Aorta (tissue), 5 donors: ENCODE measurements at regions of chr7 and their contacts with region 1.

Region 1: GRCh38 chr7:94972296-94972695 is 64.9 kb downstream of the PPP1R9A start:
- DNase-seq: no peak
- ATAC-seq: no peak
- H3K4me3 ChIP-seq: no peak overlapping the region
- H3K27ac ChIP-seq: no peak overlapping the region
- H3K4me1 ChIP-seq: peaks cover 0 to 14% of the 10 kb centered on the region in 2 donors
- H3K27me3 ChIP-seq: no peaks in the 10 kb centered on the region

Region 2: GRCh38 chr7:94907026-94907810 is 65.1 kb before region 1 on chr7 and contains the start of gene PPP1R9A:
- intact Hi-C with region 1: loop called in 1 of 2 experiments (anchors 5 kb)
- DNase-seq: peak in 1 of 2 donors; percentile 76
- ATAC-seq: peak; percentile 43
- H3K4me3 ChIP-seq: peak within 1 kb of the TSS; percentile 84 to 90
- H3K27ac ChIP-seq: peak within 1 kb of the TSS in 1 of 2 donors; percentile 0
- H3K4me1 ChIP-seq: peaks cover 0 to 3% of the 10 kb centered on the region in 2 donors
- H3K27me3 ChIP-seq: no peaks in the 10 kb centered on the region
- total RNA-seq, gene PPP1R9A: 7.4 to 12.0 TPM

Region 3: DNA sequence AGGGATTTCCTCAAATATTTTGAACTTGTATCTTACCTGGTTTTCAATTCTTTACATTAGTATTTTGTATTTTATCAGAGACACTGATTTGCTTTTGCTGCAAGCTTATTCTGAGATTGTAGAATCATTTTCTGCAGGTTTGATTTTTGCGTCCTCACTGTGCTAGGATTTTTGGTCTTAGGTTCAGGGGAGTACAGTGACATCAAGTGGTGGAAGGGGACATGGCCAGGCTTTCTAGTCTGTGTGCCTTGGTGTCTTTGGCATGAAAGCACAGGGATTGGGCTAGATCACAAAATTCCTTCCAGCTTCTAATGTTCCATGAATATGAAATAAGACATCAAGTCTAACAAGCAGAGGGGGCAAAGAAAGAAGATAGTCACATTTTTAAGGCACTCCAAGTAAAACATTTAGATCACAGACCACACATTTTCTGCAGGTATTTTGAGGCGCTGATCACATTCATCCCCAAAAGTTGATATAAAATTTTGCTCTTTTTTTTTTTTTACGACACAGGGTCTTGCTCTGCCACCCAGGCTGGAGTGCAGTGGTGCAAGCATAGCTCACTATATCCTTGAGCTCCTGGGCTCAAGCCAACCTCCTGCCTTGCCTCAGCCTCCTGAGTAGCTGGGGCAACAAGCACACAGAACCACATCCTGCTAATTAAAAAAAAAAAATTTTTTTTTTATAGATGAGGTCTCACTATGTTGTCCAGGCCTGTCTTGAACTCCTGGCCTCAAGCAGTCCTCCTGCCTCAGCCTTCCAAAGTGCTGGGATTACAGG is 227.7 kb after region 1 on chr7:
- intact Hi-C with region 1: no loop called
- DNase-seq: peak in 1 of 2 donors; percentile 48
- ATAC-seq: peak; percentile 80
- H3K4me3 ChIP-seq: no peak overlapping the region
- H3K27ac ChIP-seq: no peak overlapping the region
- H3K4me1 ChIP-seq: no peaks in the 10 kb centered on the region
- H3K27me3 ChIP-seq: no peaks in the 10 kb centered on the region